ENCODE measurements at regions of chr2 and their contacts with region 1.

Region 1: DNA sequence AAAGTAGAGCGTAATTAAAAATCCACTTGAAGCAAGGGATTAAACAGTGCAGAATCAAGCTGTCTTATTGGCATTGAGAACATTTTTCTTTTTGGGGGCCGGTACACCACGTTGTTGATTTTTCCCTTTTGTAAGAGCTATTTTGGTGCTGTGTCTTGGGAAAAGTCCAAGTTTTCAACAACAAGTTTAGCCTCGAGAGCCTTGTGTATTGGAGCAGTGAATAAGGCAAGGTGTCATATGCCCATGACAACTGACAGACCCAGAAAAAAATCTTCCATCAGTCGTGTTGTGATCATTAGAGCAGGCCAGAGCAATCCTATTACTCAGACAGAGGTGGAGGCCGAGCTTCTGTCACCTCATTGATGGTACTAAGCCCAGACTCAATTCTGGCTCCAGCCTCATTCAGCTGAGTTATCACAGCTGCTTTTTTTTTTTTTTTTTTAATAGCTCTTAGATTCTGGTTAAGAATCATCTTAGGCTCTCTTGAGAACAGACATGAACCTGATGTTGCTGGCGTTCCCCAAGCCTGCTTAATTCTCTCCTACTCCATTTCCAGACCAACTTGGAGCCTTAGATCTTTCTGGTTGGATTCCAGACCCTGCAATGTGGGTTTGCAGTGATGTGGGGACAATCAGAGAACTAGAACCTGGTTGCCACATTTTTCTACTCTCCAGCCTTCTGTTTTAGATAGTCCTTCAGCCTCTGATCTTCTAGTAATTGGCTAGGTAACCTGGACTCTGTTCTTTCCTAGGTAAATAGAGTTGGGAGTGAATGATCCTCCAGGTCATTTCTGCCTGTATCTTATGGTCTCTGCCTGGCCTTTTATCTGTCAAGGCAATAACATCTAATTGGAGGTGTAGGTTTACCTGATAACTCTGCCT is 43.1 kb downstream of the MOGAT1 start:
- DNase-seq: peak in 1 of 2 donors; percentile 63
- ATAC-seq: peak; percentile 85 to 95 (median 90)
- H3K4me3 ChIP-seq: no peak overlapping the region
- H3K27ac ChIP-seq: peak overlapping the region; percentile 15 to 88 (median 66)
- H3K4me1 ChIP-seq: peaks cover 7 to 27% (median 18%) of the 10 kb centered on the region in 9 donors
- H3K27me3 ChIP-seq: no peaks in the 10 kb centered on the region
- CTCF ChIP-seq: no peak

Region 2: GRCh38 chr2:222451224-222451674 is 263.4 kb before region 1 on chr2:
- intact Hi-C with region 1: no loop called
- DNase-seq: no peak
- ATAC-seq: peak in 2 of 8 donors; percentile 46 to 47
- H3K4me3 ChIP-seq: no peak overlapping the region
- H3K27ac ChIP-seq: no peak overlapping the region
- H3K4me1 ChIP-seq: peaks cover 0 to 33% (median 10%) of the 10 kb centered on the region in 9 donors
- H3K27me3 ChIP-seq: no peaks in the 10 kb centered on the region
- CTCF ChIP-seq: no peak

Region 3: GRCh38 chr2:222753251-222753824 is 38.7 kb after region 1 on chr2:
- intact Hi-C with region 1: loop called in 2 of 10 experiments (anchors 2 to 5 kb)
- DNase-seq: peak; percentile 45 to 72
- ATAC-seq: peak; percentile 85 to 98 (median 94)
- H3K4me3 ChIP-seq: no peak overlapping the region
- H3K27ac ChIP-seq: peak overlapping the region in 7 of 10 donors; percentile 10 to 61 (median 51)
- H3K4me1 ChIP-seq: peaks cover 0 to 31% (median 26%) of the 10 kb centered on the region in 9 donors
- H3K27me3 ChIP-seq: no peaks in the 10 kb centered on the region
- CTCF ChIP-seq: no peak

Region 4: GRCh38 chr2:222792001-222792611 is 77.5 kb after region 1 on chr2:
- intact Hi-C with region 1: loop called in 6 of 10 experiments (anchors 5 to 10 kb)
- DNase-seq: peak; percentile 37 to 62
- ATAC-seq: peak; percentile 78 to 96 (median 88)
- H3K4me3 ChIP-seq: peak overlapping the region in 1 of 10 donors; percentile 11
- H3K27ac ChIP-seq: peak overlapping the region; percentile 68 to 90 (median 78)
- H3K4me1 ChIP-seq: peaks cover 4 to 69% (median 55%) of the 10 kb centered on the region in 9 donors
- H3K27me3 ChIP-seq: no peaks in the 10 kb centered on the region
- CTCF ChIP-seq: no peak

Region 5: GRCh38 chr2:222813177-222813843 is 98.7 kb after region 1 on chr2:
- intact Hi-C with region 1: no loop called
- DNase-seq: no peak
- ATAC-seq: no peak
- H3K4me3 ChIP-seq: no peak overlapping the region
- H3K27ac ChIP-seq: no peak overlapping the region
- H3K4me1 ChIP-seq: no peaks in the 10 kb centered on the region
- H3K27me3 ChIP-seq: no peaks in the 10 kb centered on the region
- CTCF ChIP-seq: no peak

Region 6: DNA sequence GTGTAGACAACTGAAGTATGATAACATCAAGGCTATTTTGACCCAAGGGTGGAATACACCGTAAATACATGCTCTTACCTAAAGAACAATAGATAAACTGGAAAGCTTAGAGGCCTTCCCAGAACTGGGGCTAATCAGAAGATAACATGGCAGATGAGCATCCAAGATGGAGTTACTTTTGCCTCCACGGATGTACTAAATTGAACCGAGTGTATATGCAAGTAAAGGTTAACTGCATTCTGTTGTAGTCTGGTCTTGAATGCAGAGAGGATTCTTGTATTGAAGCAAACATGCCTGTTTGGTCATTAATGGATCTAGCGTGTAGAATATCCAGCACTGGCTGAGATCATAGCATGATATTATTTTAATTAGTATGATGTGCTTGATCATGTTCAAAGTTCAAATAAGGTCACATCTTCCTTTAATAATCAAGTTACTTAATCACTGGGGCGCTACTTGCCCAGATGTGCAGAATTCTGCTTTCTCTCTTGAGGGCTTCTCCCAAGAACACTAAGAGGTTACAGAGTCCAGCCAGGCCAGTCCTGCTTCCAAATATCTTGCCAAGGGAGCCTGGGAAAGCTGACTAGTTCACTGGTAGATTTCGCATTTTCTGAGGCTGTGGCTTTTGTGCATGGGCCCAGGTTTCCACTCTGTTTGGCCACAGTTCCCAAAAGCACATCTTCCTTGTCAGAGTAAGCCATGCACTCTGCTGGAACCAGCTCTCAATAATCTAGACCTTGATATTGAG is 108.8 kb after region 1 on chr2:
- intact Hi-C with region 1: no loop called
- DNase-seq: no peak
- ATAC-seq: peak in 4 of 8 donors; percentile 48 to 75 (median 54)
- H3K4me3 ChIP-seq: no peak overlapping the region
- H3K27ac ChIP-seq: no peak overlapping the region
- H3K4me1 ChIP-seq: peaks cover 0 to 10% (median 0%) of the 10 kb centered on the region in 9 donors
- H3K27me3 ChIP-seq: no peaks in the 10 kb centered on the region
- CTCF ChIP-seq: no peak

Measured in heart right ventricle (tissue), 16 donors.